ENCODE measurements at regions of chr1 and their contacts with region 1.

Region 1: DNA sequence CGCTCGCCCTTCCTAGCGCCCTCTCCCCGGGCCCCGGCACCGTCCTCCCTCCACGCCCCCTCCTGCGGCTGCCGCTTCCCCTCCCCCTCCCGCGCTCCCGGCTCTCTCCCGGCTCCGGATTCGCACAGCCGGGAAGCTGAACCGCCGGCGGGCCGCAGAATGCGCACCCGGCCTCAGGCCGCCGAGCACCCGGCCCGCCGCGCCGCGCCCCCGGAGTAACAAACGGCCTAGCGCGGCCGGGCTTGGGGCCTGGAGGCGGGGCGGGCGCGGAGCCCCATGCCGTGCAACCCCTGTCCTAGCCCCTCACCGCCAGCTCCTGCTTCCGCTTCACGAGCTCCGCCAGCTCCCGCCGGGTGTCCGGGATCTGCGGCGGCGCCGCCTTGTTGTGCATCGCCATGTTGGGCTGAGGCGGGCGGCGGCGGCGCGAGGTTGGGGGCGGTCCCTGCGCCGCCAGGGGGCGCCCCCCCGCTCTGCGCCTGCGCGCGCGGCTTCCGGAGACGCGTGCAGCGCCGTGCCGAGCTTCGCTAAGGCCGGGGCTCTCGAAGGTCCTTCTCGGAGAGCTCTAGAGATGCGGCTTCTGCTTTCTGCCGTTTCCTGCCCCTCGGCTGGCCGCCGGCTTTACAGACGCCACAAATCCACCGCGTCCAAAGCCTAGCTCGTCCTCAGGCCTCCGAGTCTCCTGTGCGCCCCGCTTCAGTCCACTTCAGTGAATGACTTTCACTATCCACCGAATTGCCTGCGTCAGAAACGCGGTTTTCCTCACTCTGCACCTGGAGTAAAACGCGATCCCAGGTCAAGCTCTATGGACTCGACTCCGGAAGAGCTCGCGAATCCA is at the start of gene MEAF6:
- DNase-seq: peak; percentile 81 to 88 (median 85)
- H3K4me3 ChIP-seq: peak within 1 kb of the TSS; percentile 74
- H3K4me3 Mint-ChIP-seq: peak within 1 kb of the TSS; percentile 97 to 99 (median 98)
- H3K27ac ChIP-seq: peak within 1 kb of the TSS; percentile 82
- H3K27ac Mint-ChIP-seq: peak within 1 kb of the TSS; percentile 96 to 99 (median 99)
- H3K4me1 ChIP-seq: peaks cover 34% of the 10 kb centered on the region
- H3K4me1 Mint-ChIP-seq: peaks cover 27 to 49% (median 38%) of the 10 kb centered on the region in 4 donors
- H3K27me3 ChIP-seq: no peaks in the 10 kb centered on the region
- H3K27me3 Mint-ChIP-seq: no peaks in the 10 kb centered on the region
- total RNA-seq, gene MEAF6: 97.9 to 98.2 TPM

Region 2: DNA sequence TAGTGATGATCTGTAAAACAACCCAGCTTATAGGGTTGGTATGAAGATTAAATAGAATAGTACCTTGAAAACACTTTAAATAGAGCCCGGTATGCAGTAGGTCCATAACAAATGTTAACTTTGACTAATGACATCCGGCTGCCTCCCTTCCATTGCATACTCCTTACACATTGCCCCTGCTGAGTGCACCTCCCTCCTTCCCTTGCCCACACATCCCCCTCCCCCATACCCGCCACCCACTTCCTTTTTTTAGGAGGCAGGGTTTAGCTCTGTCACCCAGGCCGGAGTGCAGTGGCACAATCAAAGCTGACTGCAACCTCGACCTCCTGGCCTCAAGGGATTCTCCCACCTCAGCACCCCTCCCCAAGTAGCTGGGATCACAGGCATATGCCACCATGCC is 64.6 kb before region 1 on chr1:
- CTCF ChIA-PET with region 1: interaction called, 17 read pairs
- POLR2A ChIA-PET with region 1: interaction called, 3 read pairs
- intact Hi-C with region 1: loop called (anchors 2 kb)
- DNase-seq: peak in 3 of 5 donors; percentile 13 to 22 (median 16)
- H3K4me3 ChIP-seq: no peak overlapping the region
- H3K4me3 Mint-ChIP-seq: peak overlapping the region in 2 of 8 donors; percentile 17 to 42
- H3K27ac ChIP-seq: no peak overlapping the region
- H3K27ac Mint-ChIP-seq: peak overlapping the region in 1 of 7 donors; percentile 70
- H3K4me1 ChIP-seq: peaks cover 10% of the 10 kb centered on the region
- H3K4me1 Mint-ChIP-seq: peaks cover 4 to 14% (median 7%) of the 10 kb centered on the region in 4 donors
- H3K27me3 ChIP-seq: no peaks in the 10 kb centered on the region
- H3K27me3 Mint-ChIP-seq: peaks cover 4 to 8% of the 10 kb centered on the region in 2 donors

Region 3: DNA sequence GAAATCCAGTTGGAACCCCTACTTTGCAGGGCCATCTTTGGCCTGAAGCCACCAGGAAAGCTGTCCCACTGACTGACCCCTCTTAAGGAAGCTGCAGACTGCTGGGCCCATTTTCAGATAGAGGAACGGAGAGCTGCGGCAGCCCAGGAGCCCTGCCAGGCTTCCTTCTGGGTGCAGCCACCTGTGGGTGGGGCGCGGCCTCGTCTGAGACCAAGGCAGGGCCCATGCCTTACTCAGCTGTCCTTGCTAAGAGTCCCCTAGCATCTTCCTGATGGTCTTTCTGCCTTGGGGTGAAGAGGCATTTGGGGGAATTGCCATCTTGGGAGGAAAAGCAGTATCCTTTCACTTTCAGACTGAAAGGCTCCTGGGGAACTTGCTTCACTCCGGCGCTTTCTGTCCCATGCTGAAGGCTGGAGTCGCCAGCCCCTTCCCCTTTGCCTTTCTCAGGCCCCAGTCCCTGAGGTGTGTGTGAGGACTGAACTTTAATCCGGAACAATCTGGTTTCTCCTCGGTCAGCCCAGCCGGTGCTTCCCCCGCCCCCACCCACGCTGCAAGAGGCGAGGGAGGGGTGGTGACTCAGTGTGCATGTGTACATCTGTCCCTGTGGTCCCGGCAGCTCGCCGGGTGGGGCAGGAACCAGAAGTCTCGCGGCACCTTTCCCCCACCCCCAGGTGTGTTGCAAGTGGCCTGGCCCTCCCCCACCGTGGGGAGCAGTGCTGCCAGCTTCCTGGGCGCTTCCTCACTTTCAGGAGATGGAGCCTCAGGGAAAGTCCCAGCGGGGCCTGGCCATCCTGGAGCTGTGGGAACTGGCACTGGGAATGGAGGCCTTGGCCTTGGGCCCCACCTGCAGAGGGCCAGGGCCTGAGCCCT is 35.1 kb before region 1 on chr1:
- CTCF ChIA-PET with region 1: interaction called, 13 read pairs
- POLR2A ChIA-PET with region 1: interaction called, 131 read pairs
- intact Hi-C with region 1: loop called (anchors 1 kb)
- DNase-seq: peak; percentile 82 to 97 (median 84)
- H3K4me3 ChIP-seq: peak overlapping the region; percentile 85 to 96
- H3K4me3 Mint-ChIP-seq: peak overlapping the region; percentile 95 to 99 (median 97)
- H3K27ac ChIP-seq: peak overlapping the region; percentile 96
- H3K27ac Mint-ChIP-seq: peak overlapping the region; percentile 97 to 100 (median 99)
- H3K4me1 ChIP-seq: peaks cover 39% of the 10 kb centered on the region
- H3K4me1 Mint-ChIP-seq: peaks cover 15 to 62% (median 32%) of the 10 kb centered on the region in 4 donors
- H3K27me3 ChIP-seq: no peaks in the 10 kb centered on the region
- H3K27me3 Mint-ChIP-seq: no peaks in the 10 kb centered on the region

Region 4: GRCh38 chr1:37498872-37499617 is 15.5 kb before region 1 on chr1:
- CTCF ChIA-PET with region 1: interaction called, 13 read pairs
- POLR2A ChIA-PET with region 1: interaction called, 11 read pairs
- intact Hi-C with region 1: no loop called
- DNase-seq: no peak
- H3K4me3 ChIP-seq: no peak overlapping the region
- H3K4me3 Mint-ChIP-seq: no peak overlapping the region
- H3K27ac ChIP-seq: no peak overlapping the region
- H3K27ac Mint-ChIP-seq: peak overlapping the region in 3 of 7 donors; percentile 27 to 48 (median 30)
- H3K4me1 ChIP-seq: no peaks in the 10 kb centered on the region
- H3K4me1 Mint-ChIP-seq: peaks cover 8 to 15% (median 13%) of the 10 kb centered on the region in 4 donors
- H3K27me3 ChIP-seq: no peaks in the 10 kb centered on the region
- H3K27me3 Mint-ChIP-seq: no peaks in the 10 kb centered on the region

Region 5: GRCh38 chr1:37595440-37596319 is 81.1 kb after region 1 on chr1 and contains the start of gene GNL2:
- CTCF ChIA-PET with region 1: interaction called, 3 read pairs
- POLR2A ChIA-PET with region 1: interaction called, 10 read pairs
- intact Hi-C with region 1: loop called (anchors 1 kb)
- DNase-seq: peak; percentile 95
- H3K4me3 ChIP-seq: peak within 1 kb of the TSS; percentile 74 to 86
- H3K4me3 Mint-ChIP-seq: peak within 1 kb of the TSS; percentile 98 to 99 (median 99)
- H3K27ac ChIP-seq: peak within 1 kb of the TSS; percentile 89
- H3K27ac Mint-ChIP-seq: peak within 1 kb of the TSS; percentile 99 to 100 (median 99)
- H3K4me1 ChIP-seq: peaks cover 17% of the 10 kb centered on the region
- H3K4me1 Mint-ChIP-seq: peaks cover 18 to 36% (median 26%) of the 10 kb centered on the region in 4 donors
- H3K27me3 ChIP-seq: no peaks in the 10 kb centered on the region
- H3K27me3 Mint-ChIP-seq: no peaks in the 10 kb centered on the region
- total RNA-seq, gene GNL2: 33.9 to 37.1 TPM